GM10248 (cell line): ENCODE measurements at regions of chr5 and their contacts with region 1.

Region 1: GRCh38 chr5:132736853-132737833 is at the start of gene KIF3A:
- DNase-seq: peak; percentile 100
- CTCF ChIP-seq: no peak

Region 2: GRCh38 chr5:132260714-132261551 is 476.2 kb before region 1 on chr5:
- CTCF ChIA-PET with region 1: no interaction called
- POLR2A ChIA-PET with region 1: no interaction called
- DNase-seq: peak; percentile 46
- CTCF ChIP-seq: no peak

Region 3: GRCh38 chr5:132639706-132640130 is 97.4 kb before region 1 on chr5:
- CTCF ChIA-PET with region 1: no interaction called
- POLR2A ChIA-PET with region 1: no interaction called
- DNase-seq: peak; percentile 37
- CTCF ChIP-seq: no peak

Region 4: DNA sequence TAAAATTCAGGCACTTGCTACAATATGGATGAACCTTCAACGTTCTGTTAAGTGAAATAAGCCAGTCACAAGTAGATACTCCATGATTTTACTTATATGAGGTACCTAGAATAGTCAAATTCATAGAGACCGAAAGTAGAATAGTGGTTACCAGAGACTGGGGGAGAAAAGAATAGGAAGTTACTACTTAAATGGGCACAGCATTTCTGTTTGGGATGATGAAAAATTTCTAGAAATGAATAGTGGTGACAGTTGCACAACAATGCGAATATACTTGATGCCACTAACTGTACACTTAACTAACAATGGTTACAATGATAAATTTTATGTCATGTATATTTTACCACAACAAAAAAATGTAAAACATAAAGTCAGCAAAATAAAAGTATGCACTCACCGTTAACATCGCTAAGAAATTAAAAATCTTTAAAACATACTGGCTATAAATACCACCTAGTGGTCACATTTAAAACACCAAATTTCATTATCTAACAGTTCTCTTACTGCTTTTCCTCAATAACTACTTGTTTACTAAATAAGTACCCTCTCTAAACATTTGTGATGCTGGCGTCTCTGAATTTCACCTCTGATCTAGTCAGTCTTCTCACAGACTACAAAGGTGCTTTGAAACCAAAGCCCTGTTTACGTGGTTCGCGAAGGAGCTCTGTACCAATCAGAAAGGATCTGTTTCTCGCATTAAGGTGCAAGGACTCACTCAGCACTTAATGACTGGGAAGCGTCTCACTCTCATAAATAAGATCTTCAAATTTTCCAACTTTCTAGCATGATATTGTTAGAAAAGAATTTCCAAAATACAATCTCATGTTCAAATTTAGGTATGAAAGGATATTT is 22.5 kb before region 1 on chr5:
- CTCF ChIA-PET with region 1: interaction called, 51 read pairs
- POLR2A ChIA-PET with region 1: no interaction called
- DNase-seq: no peak
- CTCF ChIP-seq: peak; percentile 3